Panc1 (cell line): ENCODE measurements at regions of chr14 and their contacts with region 1.

Region 1: DNA sequence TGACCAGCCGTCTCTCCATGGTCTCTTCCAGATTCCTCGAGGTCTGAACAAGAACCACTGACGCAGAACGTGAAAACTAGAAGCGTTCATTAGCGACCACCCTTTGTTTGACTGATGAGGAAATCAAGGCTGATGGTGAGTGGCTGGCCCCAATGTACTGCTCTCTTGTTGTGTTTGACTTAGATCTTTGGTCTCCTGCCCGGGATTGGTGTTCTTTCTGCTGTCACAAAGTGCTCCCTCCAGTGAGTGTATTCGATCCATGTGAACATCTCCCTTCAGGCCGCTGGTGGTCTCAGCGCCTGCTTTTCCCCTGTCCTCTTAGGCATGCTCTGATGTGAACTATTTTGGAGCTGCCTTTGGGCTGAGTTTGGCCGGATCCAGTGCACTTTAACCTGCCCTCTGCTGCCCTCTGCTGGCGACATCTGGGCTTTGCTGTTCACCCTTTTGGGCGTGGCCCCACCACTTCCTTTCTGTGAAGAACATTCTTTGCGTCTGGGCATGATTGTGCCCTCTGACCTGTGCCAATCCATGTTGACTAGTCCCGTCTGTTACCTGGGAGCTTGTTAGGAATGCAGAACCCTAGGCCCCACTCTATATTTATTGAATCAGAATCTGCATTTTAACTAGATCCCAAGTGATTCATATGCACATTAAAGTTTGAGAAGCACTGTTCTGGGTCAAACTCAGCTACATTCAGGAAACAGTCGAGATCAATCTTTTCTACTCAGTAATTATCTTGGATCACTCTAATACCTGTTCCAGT is 279.2 kb downstream of the TTC6 start:
- DNase-seq: peak; percentile 47
- ATAC-seq: peak; percentile 89
- H3K4me3 ChIP-seq: no peak overlapping the region
- H3K27ac ChIP-seq: no peak overlapping the region
- H3K4me1 ChIP-seq: no peaks in the 10 kb centered on the region
- H3K27me3 ChIP-seq: no peaks in the 10 kb centered on the region
- CTCF ChIP-seq: peak; percentile 82

Region 2: GRCh38 chr14:37246427-37246914 is 628.1 kb before region 1 on chr14:
- CTCF ChIA-PET with region 1: no interaction called
- POLR2A ChIA-PET with region 1: no interaction called
- in situ Hi-C with region 1: no loop called
- intact Hi-C with region 1: loop called (anchors 5 kb)
- DNase-seq: no peak
- ATAC-seq: no peak
- H3K4me3 ChIP-seq: no peak overlapping the region
- H3K27ac ChIP-seq: no peak overlapping the region
- H3K4me1 ChIP-seq: no peaks in the 10 kb centered on the region
- H3K27me3 ChIP-seq: no peaks in the 10 kb centered on the region
- CTCF ChIP-seq: peak; percentile 68; the same call in 1 of the 2 replicates

Region 3: GRCh38 chr14:37599507-37600368 is 274.9 kb before region 1 on chr14:
- CTCF ChIA-PET with region 1: no interaction called
- POLR2A ChIA-PET with region 1: no interaction called
- in situ Hi-C with region 1: no loop called
- intact Hi-C with region 1: loop called (anchors 10 kb)
- DNase-seq: no peak
- ATAC-seq: 0 out of 2 replicates have a peak, but pooled peaks have one; percentile 32
- H3K4me3 ChIP-seq: peak overlapping the region; percentile 32 to 43
- H3K27ac ChIP-seq: no peak overlapping the region
- H3K4me1 ChIP-seq: no peaks in the 10 kb centered on the region
- H3K27me3 ChIP-seq: peaks cover 3% of the 10 kb centered on the region
- CTCF ChIP-seq: no peak

Region 4: DNA sequence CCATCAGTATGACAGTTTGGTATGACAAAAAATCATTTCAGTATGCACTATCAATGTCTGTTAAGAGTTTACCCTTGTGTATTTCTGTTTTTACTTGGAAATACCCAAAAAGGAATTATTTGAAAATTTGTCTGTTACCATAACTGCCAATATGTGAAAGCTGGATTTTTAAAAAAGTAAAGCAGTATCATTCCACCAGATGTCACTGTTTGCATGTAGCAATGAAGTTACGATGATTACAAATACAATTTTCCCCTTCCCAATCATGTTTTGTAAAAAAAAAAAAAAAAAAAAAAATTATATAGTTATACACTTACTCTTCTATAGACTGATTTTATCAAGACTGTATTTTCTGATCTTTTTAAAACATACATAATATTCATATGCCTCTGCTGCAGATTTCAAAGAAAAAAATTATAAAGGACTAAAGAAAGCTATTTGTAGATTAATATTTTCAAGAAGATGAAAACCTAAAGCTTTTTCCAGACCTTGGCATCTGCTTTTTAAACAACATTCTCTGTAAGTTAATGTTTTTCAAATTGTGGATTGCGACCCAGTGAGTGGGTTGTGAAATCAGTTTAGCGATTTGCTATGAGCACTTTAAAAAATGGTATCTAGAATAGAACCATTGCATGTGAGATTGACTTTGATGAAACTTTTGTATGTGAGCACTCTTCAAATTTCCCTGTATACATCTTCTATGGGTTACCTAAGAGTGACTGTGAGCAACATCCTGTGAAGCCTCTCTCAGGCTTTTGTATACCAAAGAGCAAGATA is 165.0 kb before region 1 on chr14:
- CTCF ChIA-PET with region 1: interaction called, 17 read pairs
- POLR2A ChIA-PET with region 1: no interaction called
- in situ Hi-C with region 1: no loop called
- intact Hi-C with region 1: loop called (anchors 2 kb)
- DNase-seq: no peak
- ATAC-seq: no peak
- H3K4me3 ChIP-seq: no peak overlapping the region
- H3K27ac ChIP-seq: no peak overlapping the region
- H3K4me1 ChIP-seq: no peaks in the 10 kb centered on the region
- H3K27me3 ChIP-seq: no peaks in the 10 kb centered on the region
- CTCF ChIP-seq: peak; percentile 34; the same call in 1 of the 2 replicates